B cell (primary cell): ENCODE measurements at regions of chr2 and their contacts with region 1.

Region 1: GRCh38 chr2:227766373-227766883 is 20.7 kb downstream of the SCYGR8 start:
- DNase-seq: peak; percentile 72
- ATAC-seq: peak; percentile 88
- H3K4me3 ChIP-seq: no peak overlapping the region
- H3K4me3 Mint-ChIP-seq: no peak overlapping the region
- H3K27ac ChIP-seq: no peak overlapping the region
- H3K27ac Mint-ChIP-seq: no peak overlapping the region
- H3K4me1 ChIP-seq: no peaks in the 10 kb centered on the region
- H3K4me1 Mint-ChIP-seq: no peaks in the 10 kb centered on the region
- H3K27me3 ChIP-seq: no peaks in the 10 kb centered on the region
- H3K27me3 Mint-ChIP-seq: peaks cover 3% of the 10 kb centered on the region
- CTCF ChIP-seq: peak; percentile 86

Region 2: GRCh38 chr2:227132986-227133385 is 633.4 kb before region 1 on chr2:
- CTCF ChIA-PET with region 1: interaction called, 34 read pairs
- POLR2A ChIA-PET with region 1: no interaction called
- intact Hi-C with region 1: no loop called
- DNase-seq: no peak
- ATAC-seq: no peak
- H3K4me3 ChIP-seq: no peak overlapping the region
- H3K4me3 Mint-ChIP-seq: no peak overlapping the region
- H3K27ac ChIP-seq: no peak overlapping the region
- H3K27ac Mint-ChIP-seq: no peak overlapping the region
- H3K4me1 ChIP-seq: no peaks in the 10 kb centered on the region
- H3K4me1 Mint-ChIP-seq: no peaks in the 10 kb centered on the region
- H3K27me3 ChIP-seq: no peaks in the 10 kb centered on the region
- H3K27me3 Mint-ChIP-seq: no peaks in the 10 kb centered on the region
- CTCF ChIP-seq: no peak

Region 3: GRCh38 chr2:227363756-227364155 is 402.7 kb before region 1 on chr2:
- CTCF ChIA-PET with region 1: interaction called, 22 read pairs
- POLR2A ChIA-PET with region 1: no interaction called
- intact Hi-C with region 1: loop called (anchors 1 kb)
- DNase-seq: peak; percentile 53
- ATAC-seq: no peak
- H3K4me3 ChIP-seq: no peak overlapping the region
- H3K4me3 Mint-ChIP-seq: no peak overlapping the region
- H3K27ac ChIP-seq: no peak overlapping the region
- H3K27ac Mint-ChIP-seq: no peak overlapping the region
- H3K4me1 ChIP-seq: peaks cover 4% of the 10 kb centered on the region in 2 donors
- H3K4me1 Mint-ChIP-seq: peaks cover 6% of the 10 kb centered on the region
- H3K27me3 ChIP-seq: no peaks in the 10 kb centered on the region
- H3K27me3 Mint-ChIP-seq: no peaks in the 10 kb centered on the region
- CTCF ChIP-seq: peak; percentile 74

Region 4: GRCh38 chr2:227471924-227472264 is 294.5 kb before region 1 on chr2 and contains the start of gene AGFG1:
- CTCF ChIA-PET with region 1: interaction called, 11 read pairs
- POLR2A ChIA-PET with region 1: no interaction called
- intact Hi-C with region 1: loop called (anchors 2 kb)
- DNase-seq: peak; percentile 89
- ATAC-seq: peak; percentile 85
- H3K4me3 ChIP-seq: peak within 1 kb of the TSS; percentile 46 to 86 (median 75)
- H3K4me3 Mint-ChIP-seq: peak within 1 kb of the TSS; percentile 86
- H3K27ac ChIP-seq: peak within 1 kb of the TSS; percentile 74 to 87
- H3K27ac Mint-ChIP-seq: peak within 1 kb of the TSS; percentile 80
- H3K4me1 ChIP-seq: peaks cover 19 to 33% of the 10 kb centered on the region in 2 donors
- H3K4me1 Mint-ChIP-seq: peaks cover 37% of the 10 kb centered on the region
- H3K27me3 ChIP-seq: no peaks in the 10 kb centered on the region
- H3K27me3 Mint-ChIP-seq: no peaks in the 10 kb centered on the region
- CTCF ChIP-seq: peak; percentile 94
- total RNA-seq, gene AGFG1: 83.3 and 95.0 TPM in 2 replicates

Region 5: GRCh38 chr2:227657199-227657845 is 109.1 kb before region 1 on chr2:
- CTCF ChIA-PET with region 1: interaction called, 17 read pairs
- POLR2A ChIA-PET with region 1: no interaction called
- intact Hi-C with region 1: no loop called
- DNase-seq: no peak
- ATAC-seq: no peak
- H3K4me3 ChIP-seq: no peak overlapping the region
- H3K4me3 Mint-ChIP-seq: no peak overlapping the region
- H3K27ac ChIP-seq: no peak overlapping the region
- H3K27ac Mint-ChIP-seq: no peak overlapping the region
- H3K4me1 ChIP-seq: no peaks in the 10 kb centered on the region
- H3K4me1 Mint-ChIP-seq: no peaks in the 10 kb centered on the region
- H3K27me3 ChIP-seq: no peaks in the 10 kb centered on the region
- H3K27me3 Mint-ChIP-seq: no peaks in the 10 kb centered on the region
- CTCF ChIP-seq: no peak

Region 6: GRCh38 chr2:227684276-227684675 is 82.2 kb before region 1 on chr2:
- CTCF ChIA-PET with region 1: no interaction called
- POLR2A ChIA-PET with region 1: no interaction called
- intact Hi-C with region 1: no loop called
- DNase-seq: no peak
- ATAC-seq: no peak
- H3K4me3 ChIP-seq: no peak overlapping the region
- H3K4me3 Mint-ChIP-seq: no peak overlapping the region
- H3K27ac ChIP-seq: no peak overlapping the region
- H3K27ac Mint-ChIP-seq: no peak overlapping the region
- H3K4me1 ChIP-seq: no peaks in the 10 kb centered on the region
- H3K4me1 Mint-ChIP-seq: no peaks in the 10 kb centered on the region
- H3K27me3 ChIP-seq: peaks cover 0 to 7% (median 2%) of the 10 kb centered on the region in 4 experiments
- H3K27me3 Mint-ChIP-seq: peaks cover 14% of the 10 kb centered on the region
- CTCF ChIP-seq: no peak

Region 7: DNA sequence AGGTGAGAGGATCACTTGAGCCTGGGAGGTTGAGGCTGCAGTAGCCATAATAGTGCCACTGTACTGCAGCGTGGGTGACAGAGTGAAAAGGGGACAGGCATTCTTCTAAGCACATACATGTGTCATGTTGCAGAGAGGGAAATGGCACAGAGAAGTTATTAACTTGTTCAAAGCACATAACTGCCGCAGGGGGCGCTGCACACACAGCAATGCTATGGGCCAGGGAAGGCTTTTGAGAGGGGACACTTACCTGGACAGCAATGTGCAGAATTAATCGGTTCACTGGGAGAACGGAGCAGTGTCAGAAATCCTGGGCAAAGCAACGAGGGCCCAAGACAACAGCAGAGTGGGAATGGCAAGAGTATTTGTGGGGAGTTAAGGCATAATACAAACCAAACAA is 18.3 kb before region 1 on chr2:
- CTCF ChIA-PET with region 1: no interaction called
- POLR2A ChIA-PET with region 1: no interaction called
- intact Hi-C with region 1: no loop called
- DNase-seq: no peak
- ATAC-seq: no peak
- H3K4me3 ChIP-seq: no peak overlapping the region
- H3K4me3 Mint-ChIP-seq: no peak overlapping the region
- H3K27ac ChIP-seq: no peak overlapping the region
- H3K27ac Mint-ChIP-seq: no peak overlapping the region
- H3K4me1 ChIP-seq: no peaks in the 10 kb centered on the region
- H3K4me1 Mint-ChIP-seq: no peaks in the 10 kb centered on the region
- H3K27me3 ChIP-seq: peaks cover 0 to 5% (median 0%) of the 10 kb centered on the region in 4 experiments
- H3K27me3 Mint-ChIP-seq: peaks cover 8% of the 10 kb centered on the region
- CTCF ChIP-seq: no peak

Region 8: GRCh38 chr2:227796045-227796711 is 29.8 kb after region 1 on chr2:
- CTCF ChIA-PET with region 1: no interaction called
- POLR2A ChIA-PET with region 1: no interaction called
- intact Hi-C with region 1: no loop called
- DNase-seq: no peak
- ATAC-seq: no peak
- H3K4me3 ChIP-seq: no peak overlapping the region
- H3K4me3 Mint-ChIP-seq: no peak overlapping the region
- H3K27ac ChIP-seq: no peak overlapping the region
- H3K27ac Mint-ChIP-seq: no peak overlapping the region
- H3K4me1 ChIP-seq: no peaks in the 10 kb centered on the region
- H3K4me1 Mint-ChIP-seq: no peaks in the 10 kb centered on the region
- H3K27me3 ChIP-seq: peaks cover 0 to 4% (median 0%) of the 10 kb centered on the region in 4 experiments
- H3K27me3 Mint-ChIP-seq: peaks cover 14% of the 10 kb centered on the region
- CTCF ChIP-seq: no peak

Region 9: GRCh38 chr2:227862227-227862740 is 95.9 kb after region 1 on chr2:
- CTCF ChIA-PET with region 1: no interaction called
- POLR2A ChIA-PET with region 1: no interaction called
- intact Hi-C with region 1: no loop called
- DNase-seq: peak; percentile 42
- ATAC-seq: no peak
- H3K4me3 ChIP-seq: no peak overlapping the region
- H3K4me3 Mint-ChIP-seq: no peak overlapping the region
- H3K27ac ChIP-seq: no peak overlapping the region
- H3K27ac Mint-ChIP-seq: no peak overlapping the region
- H3K4me1 ChIP-seq: no peaks in the 10 kb centered on the region
- H3K4me1 Mint-ChIP-seq: no peaks in the 10 kb centered on the region
- H3K27me3 ChIP-seq: no peaks in the 10 kb centered on the region
- H3K27me3 Mint-ChIP-seq: peaks cover 6% of the 10 kb centered on the region
- CTCF ChIP-seq: peak; percentile 66